Activated CD8-positive, alpha-beta memory T cell treated with anti-CD3 and anti-CD28 coated beads, Interleukin-2, amount 10 ng/mL, durations not matched to agents 7 days and 5 days (primary cell): ENCODE measurements at regions of chr3 and their contacts with region 1.

Region 1: GRCh38 chr3:48439820-48440589 is at the starts of genes CCDC51 and TMA7:
- DNase-seq: peak; percentile 99
- ATAC-seq: peak; percentile 96
- H3K4me3 Mint-ChIP-seq: peak within 1 kb of the TSS; percentile 97
- H3K27ac Mint-ChIP-seq: peak within 1 kb of the TSS; percentile 97
- H3K4me1 Mint-ChIP-seq: peaks cover 45% of the 10 kb centered on the region
- H3K27me3 Mint-ChIP-seq: no peaks in the 10 kb centered on the region
- total RNA-seq, gene CCDC51: 18.4 to 21.9 TPM
- total RNA-seq, gene TMA7: 219 to 298 TPM

Region 2: GRCh38 chr3:47678446-47679338 is 761.3 kb before region 1 on chr3:
- CTCF ChIA-PET with region 1: no interaction called
- DNase-seq: no peak
- ATAC-seq: peak; percentile 65
- H3K4me3 Mint-ChIP-seq: no peak overlapping the region
- H3K27ac Mint-ChIP-seq: peak overlapping the region; percentile 6
- H3K4me1 Mint-ChIP-seq: peaks cover 16% of the 10 kb centered on the region
- H3K27me3 Mint-ChIP-seq: no peaks in the 10 kb centered on the region

Region 3: DNA sequence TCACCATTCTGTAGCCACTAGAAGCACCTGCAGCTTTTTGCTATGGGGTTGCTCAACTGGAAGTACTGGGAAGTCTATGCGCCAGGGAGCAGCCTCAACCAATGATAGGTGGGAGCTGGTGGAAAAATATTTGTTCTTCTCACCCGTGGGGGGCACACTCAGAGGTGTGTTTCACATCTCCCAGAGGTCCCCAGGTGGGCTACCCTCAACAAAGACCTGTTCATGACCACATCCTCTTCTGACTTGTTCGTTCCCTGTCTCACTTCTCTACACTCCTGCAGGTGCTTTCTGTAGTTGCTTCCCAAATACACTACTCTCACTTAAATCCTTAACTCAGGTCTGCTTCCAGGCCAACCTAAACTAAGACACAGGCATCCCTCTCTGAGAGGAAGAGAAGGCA is 213.1 kb before region 1 on chr3:
- CTCF ChIA-PET with region 1: interaction called, 46 read pairs
- DNase-seq: no peak
- ATAC-seq: no peak
- H3K4me3 Mint-ChIP-seq: no peak overlapping the region
- H3K27ac Mint-ChIP-seq: no peak overlapping the region
- H3K4me1 Mint-ChIP-seq: peaks cover 6% of the 10 kb centered on the region
- H3K27me3 Mint-ChIP-seq: peaks cover 6% of the 10 kb centered on the region

Region 4: DNA sequence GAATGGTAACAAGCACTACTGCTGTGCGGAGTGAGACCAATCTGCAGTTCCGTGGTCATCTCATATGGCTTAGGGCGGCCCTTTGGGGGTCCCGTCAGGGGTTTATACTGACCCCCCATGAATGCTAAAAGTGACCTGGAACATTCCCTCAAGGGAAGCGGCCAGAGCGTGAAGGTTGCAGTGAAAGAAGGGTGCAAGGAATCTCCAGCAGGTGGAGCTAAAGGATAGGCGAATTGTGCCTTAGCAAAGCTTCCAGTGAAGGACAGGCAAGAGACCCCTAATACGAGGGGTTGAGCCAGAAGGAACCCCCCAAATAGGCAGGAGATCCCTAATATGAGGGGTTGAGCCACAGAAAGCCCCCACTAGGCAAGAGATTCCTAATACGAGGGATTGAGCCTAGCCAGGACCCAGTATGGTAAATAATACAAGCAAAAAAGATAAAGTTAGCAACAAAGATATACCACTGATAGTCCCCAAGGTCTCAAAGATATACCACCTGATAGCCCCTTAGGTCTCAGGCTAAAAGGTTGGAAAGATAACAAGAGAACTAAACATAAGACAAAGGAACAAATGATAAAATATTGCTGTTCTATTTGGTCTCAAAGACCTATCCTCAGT is 166.3 kb before region 1 on chr3:
- CTCF ChIA-PET with region 1: interaction called, 61 read pairs
- DNase-seq: peak; percentile 68
- ATAC-seq: peak; percentile 61
- H3K4me3 Mint-ChIP-seq: no peak overlapping the region
- H3K27ac Mint-ChIP-seq: no peak overlapping the region
- H3K4me1 Mint-ChIP-seq: peaks cover 17% of the 10 kb centered on the region
- H3K27me3 Mint-ChIP-seq: no peaks in the 10 kb centered on the region

Region 5: DNA sequence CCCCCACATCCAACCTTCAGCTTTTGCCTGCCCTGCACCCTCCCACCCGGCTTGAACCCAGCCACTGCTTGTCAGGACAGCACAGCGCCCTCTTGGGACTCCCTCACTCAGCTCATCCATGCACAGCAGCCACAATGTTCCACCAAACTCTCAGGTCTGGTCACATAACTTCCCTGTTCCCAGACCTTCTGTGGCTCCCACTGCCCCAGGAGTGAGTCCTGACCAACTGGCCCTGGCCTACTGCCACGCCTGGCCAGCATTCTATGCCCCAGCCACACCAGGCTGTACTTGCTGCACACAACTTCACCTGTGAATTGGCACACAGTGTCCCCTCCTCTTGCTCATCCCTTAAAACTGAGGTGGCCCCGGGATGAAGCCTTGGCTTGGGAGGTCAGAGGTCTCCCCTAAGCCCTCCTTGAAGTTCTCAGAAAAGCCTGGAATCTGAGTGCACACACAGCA is 31.2 kb before region 1 on chr3:
- CTCF ChIA-PET with region 1: interaction called, 34 read pairs
- DNase-seq: peak; percentile 40
- ATAC-seq: no peak
- H3K4me3 Mint-ChIP-seq: no peak overlapping the region
- H3K27ac Mint-ChIP-seq: no peak overlapping the region
- H3K4me1 Mint-ChIP-seq: no peaks in the 10 kb centered on the region
- H3K27me3 Mint-ChIP-seq: no peaks in the 10 kb centered on the region

Region 6: GRCh38 chr3:48465531-48466378 is 25.8 kb after region 1 on chr3:
- CTCF ChIA-PET with region 1: interaction called, 46 read pairs
- DNase-seq: peak; percentile 91
- ATAC-seq: peak; percentile 93
- H3K4me3 Mint-ChIP-seq: peak overlapping the region; percentile 88
- H3K27ac Mint-ChIP-seq: peak overlapping the region; percentile 99
- H3K4me1 Mint-ChIP-seq: peaks cover 52% of the 10 kb centered on the region
- H3K27me3 Mint-ChIP-seq: no peaks in the 10 kb centered on the region

Region 7: GRCh38 chr3:48548729-48549705 is 109.0 kb after region 1 on chr3:
- CTCF ChIA-PET with region 1: interaction called, 55 read pairs
- DNase-seq: peak; percentile 89
- ATAC-seq: peak; percentile 98
- H3K4me3 Mint-ChIP-seq: no peak overlapping the region
- H3K27ac Mint-ChIP-seq: no peak overlapping the region
- H3K4me1 Mint-ChIP-seq: peaks cover 9% of the 10 kb centered on the region
- H3K27me3 Mint-ChIP-seq: no peaks in the 10 kb centered on the region